A549 (cell line): ENCODE measurements at regions of chr12 and their contacts with region 1.

Region 1: DNA sequence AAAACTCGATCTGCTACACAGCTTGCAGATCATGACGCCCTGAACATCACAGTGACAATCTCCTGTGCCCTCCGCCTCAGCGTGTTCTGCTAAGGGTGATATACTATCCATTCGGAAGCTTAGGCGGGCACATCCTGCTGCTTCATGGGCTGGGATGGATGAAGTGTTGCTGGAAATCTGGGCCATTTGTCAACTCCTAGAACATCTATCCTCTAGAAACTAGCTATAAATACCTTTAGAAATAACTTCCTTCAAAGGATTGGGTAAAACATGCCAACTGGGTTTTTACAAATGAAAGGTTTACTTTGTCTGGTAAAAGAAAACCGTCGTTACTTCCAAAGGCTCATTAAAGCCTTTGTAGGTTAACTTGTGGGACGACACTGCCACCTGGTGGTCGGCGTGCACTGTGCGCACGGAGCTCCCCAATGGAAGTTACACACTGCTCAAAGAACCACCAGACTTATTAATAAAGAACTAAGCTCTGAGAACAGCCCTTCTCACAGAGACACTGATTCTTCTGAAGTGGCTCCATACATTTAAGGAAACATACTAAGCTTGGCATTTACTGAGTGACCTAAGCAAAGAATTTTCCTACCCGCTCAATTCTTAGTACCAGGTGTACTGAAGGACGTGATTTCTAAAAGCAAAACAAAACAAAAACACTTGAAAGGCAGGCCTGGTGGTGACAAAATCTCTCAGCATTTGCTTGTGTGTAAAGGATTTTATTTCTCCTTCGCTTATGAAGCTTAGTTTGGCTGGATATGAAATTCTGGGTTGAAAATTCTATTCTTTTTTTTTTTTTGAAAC is 21.6 kb upstream of the CACNA2D4 start:
- DNase-seq: peak; percentile 72 to 80
- ATAC-seq: peak; percentile 90 to 94
- H3K4me3 ChIP-seq: no peak overlapping the region
- H3K27ac ChIP-seq: no peak overlapping the region
- H3K4me1 ChIP-seq: peaks cover 17% of the 10 kb centered on the region
- CTCF ChIP-seq: peak; percentile 91
- EP300 ChIP-seq: no peak
- POLR2A ChIP-seq: no peak
- RAD21 ChIP-seq: peak; percentile 93 to 94

Region 2: GRCh38 chr12:1634590-1635191 is 305.3 kb before region 1 on chr12:
- CTCF ChIA-PET with region 1: interaction called, 22 read pairs
- POLR2A ChIA-PET with region 1: no interaction called
- DNase-seq: peak; percentile 76 to 82
- ATAC-seq: peak; percentile 74 to 87
- H3K4me3 ChIP-seq: no peak overlapping the region
- H3K27ac ChIP-seq: no peak overlapping the region
- H3K4me1 ChIP-seq: peaks cover 3% of the 10 kb centered on the region; the same call in 1 of the 3 replicates
- CTCF ChIP-seq: peak; percentile 76
- EP300 ChIP-seq: no peak
- POLR2A ChIP-seq: no peak
- RAD21 ChIP-seq: peak; percentile 73 to 80

Region 3: DNA sequence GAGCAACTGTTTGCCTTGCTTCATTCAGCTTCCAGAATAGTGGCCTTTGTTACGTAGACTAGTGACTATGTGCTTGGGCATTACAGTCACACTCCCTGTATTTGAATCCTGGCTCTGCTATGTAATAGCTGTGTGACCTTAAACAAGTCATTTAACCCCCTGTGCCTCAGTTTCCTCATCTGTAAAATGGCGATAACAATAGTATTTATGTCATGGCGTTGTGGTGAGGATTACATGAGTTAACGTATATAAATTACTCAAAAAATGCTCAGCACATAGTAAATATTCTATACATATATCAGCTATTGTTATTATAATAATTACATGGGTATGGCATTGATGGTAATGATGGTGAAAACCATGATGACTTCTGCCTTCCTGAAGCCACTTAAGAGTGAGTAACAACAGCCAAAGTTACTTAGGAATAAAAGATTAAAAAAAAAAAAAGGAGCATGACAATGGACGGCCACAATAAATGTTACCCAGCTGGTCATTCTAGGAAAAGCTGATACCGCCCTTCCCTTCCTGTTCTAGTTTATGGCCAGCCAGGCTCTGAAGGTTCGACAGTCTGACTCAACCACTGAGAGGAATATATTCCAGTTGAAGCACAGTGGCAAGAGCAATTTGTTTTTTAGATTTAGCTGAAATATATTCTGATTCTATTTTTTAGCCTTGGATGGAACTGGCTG is 259.1 kb before region 1 on chr12:
- CTCF ChIA-PET with region 1: interaction called, 13 read pairs
- POLR2A ChIA-PET with region 1: no interaction called
- DNase-seq: no peak
- ATAC-seq: no peak
- H3K4me3 ChIP-seq: no peak overlapping the region
- H3K27ac ChIP-seq: no peak overlapping the region
- H3K4me1 ChIP-seq: no peaks in the 10 kb centered on the region
- CTCF ChIP-seq: no peak
- EP300 ChIP-seq: no peak
- POLR2A ChIP-seq: no peak
- RAD21 ChIP-seq: no peak

Region 4: GRCh38 chr12:1758887-1759286 is 181.1 kb before region 1 on chr12:
- CTCF ChIA-PET with region 1: no interaction called
- POLR2A ChIA-PET with region 1: no interaction called
- DNase-seq: no peak
- ATAC-seq: no peak
- H3K4me3 ChIP-seq: no peak overlapping the region
- H3K27ac ChIP-seq: peak overlapping the region in 1 of 2 experiments; percentile 15; a peak in 2 of 6 replicates
- H3K4me1 ChIP-seq: peaks cover 18% of the 10 kb centered on the region
- CTCF ChIP-seq: no peak
- EP300 ChIP-seq: no peak
- POLR2A ChIP-seq: no peak
- RAD21 ChIP-seq: no peak

Region 5: DNA sequence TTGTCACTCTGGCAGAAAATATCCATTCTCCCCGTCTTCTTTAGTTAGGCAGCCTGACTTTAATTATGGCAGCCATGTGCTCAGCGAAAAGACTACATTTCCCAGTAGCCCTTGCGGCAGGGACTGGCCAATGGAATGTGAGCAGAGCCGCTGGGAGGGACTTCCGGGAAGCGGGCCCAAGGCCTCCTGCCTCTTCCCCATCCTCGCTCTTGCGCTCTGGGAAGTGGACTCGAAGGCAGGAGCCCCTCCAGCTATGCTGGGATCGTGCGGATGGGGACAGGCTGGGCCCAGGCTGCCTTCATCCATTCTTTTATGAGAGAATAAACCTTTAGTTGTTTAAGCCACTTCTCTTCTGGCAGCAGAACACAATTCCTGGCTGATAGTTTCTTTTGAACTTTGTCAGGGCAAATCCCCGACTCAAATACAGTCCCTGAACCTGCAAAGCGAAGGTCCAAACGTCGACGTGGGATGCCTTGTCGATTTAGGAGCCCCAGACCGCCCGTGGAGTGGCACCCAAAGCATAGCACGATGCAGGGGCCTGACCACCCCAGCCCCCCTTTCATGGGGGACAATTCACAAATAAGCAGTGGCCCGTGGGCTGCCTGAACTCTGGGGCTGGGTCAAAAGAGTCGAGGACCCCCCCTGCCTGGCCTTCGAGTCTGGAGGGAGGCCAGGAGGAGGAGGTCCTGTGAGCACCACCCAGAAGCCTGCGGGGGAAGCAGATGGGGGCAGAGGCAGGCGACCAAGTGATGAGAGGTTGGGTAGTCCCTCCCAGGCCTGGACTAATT is 135.3 kb before region 1 on chr12:
- CTCF ChIA-PET with region 1: interaction called, 324 read pairs
- POLR2A ChIA-PET with region 1: no interaction called
- DNase-seq: peak; percentile 92 to 93
- ATAC-seq: peak; percentile 80 to 96
- H3K4me3 ChIP-seq: no peak overlapping the region
- H3K27ac ChIP-seq: peak overlapping the region; percentile 60 to 75
- H3K4me1 ChIP-seq: 0 out of 3 replicates have a peak, but pooled peaks cover 4% of the 10 kb centered on the region
- CTCF ChIP-seq: no peak
- EP300 ChIP-seq: no peak
- POLR2A ChIP-seq: peak; percentile 41
- RAD21 ChIP-seq: no peak

Region 6: DNA sequence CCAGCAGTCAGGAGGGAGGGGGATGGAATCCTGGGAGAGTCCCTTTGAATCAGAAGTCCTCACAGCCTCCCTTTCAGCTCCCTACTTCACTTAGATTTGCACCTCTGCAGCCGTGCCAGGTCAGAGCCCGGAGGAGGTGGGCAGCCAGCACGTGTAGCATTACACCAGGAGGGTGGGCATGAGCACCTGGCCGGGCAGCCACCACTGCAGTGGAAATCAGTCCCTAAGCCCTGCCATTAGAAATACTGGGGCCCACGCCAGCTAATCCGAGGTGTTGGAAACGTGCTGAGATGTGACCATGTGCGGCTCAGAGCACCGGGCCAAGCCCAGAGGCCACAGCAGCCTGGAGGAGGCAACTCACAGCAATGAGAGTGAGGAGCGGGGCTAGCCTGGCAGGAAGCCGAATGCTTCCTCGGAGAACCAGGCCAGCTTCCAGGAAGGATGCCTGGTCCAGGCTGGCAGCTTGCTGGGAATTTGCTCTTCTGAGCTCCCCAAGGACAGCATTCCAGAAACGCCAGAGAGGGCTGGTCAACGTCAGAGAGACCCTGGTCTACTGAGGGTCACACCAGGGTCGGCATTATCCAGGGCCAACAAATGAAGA is 12.2 kb before region 1 on chr12:
- CTCF ChIA-PET with region 1: interaction called, 54 read pairs
- POLR2A ChIA-PET with region 1: interaction called, 3 read pairs
- DNase-seq: no peak
- ATAC-seq: no peak
- H3K4me3 ChIP-seq: no peak overlapping the region
- H3K27ac ChIP-seq: no peak overlapping the region
- H3K4me1 ChIP-seq: no peaks in the 10 kb centered on the region
- CTCF ChIP-seq: no peak
- EP300 ChIP-seq: no peak
- POLR2A ChIP-seq: no peak
- RAD21 ChIP-seq: no peak

Region 7: DNA sequence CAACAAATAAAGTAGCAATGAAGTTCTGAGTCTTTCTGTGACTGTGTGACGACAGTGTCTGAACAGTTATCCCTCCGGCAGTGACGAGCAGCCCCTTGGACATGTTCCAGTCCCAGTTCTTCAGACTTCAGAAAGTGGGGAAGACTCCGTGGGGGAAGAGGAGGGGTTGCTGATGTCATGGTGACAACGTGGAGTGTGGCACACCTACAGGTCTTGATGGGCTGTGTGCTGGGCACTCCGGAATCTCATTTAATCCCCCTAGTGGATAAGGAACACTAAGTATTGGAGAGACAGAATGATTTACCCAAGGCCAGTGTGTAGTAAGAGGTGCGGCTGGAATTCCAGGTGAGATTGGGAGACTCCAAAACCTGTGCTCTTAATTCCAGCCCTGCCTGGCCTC is 392.9 kb after region 1 on chr12:
- CTCF ChIA-PET with region 1: no interaction called
- POLR2A ChIA-PET with region 1: no interaction called
- DNase-seq: peak in 1 of 2 experiments; percentile 13
- ATAC-seq: peak; percentile 45 to 67; a peak in 4 of 6 replicates
- H3K4me3 ChIP-seq: no peak overlapping the region
- H3K27ac ChIP-seq: no peak overlapping the region
- H3K4me1 ChIP-seq: no peaks in the 10 kb centered on the region; the same call in 2 of the 3 replicates
- CTCF ChIP-seq: no peak
- EP300 ChIP-seq: no peak
- POLR2A ChIP-seq: no peak
- RAD21 ChIP-seq: no peak

Region 8: GRCh38 chr12:2451025-2451424 is 511.0 kb after region 1 on chr12:
- CTCF ChIA-PET with region 1: no interaction called
- POLR2A ChIA-PET with region 1: no interaction called
- DNase-seq: no peak
- ATAC-seq: no peak
- H3K4me3 ChIP-seq: no peak overlapping the region
- H3K27ac ChIP-seq: no peak overlapping the region
- H3K4me1 ChIP-seq: no peaks in the 10 kb centered on the region
- CTCF ChIP-seq: no peak
- EP300 ChIP-seq: no peak
- POLR2A ChIP-seq: no peak
- RAD21 ChIP-seq: no peak

Region 9: DNA sequence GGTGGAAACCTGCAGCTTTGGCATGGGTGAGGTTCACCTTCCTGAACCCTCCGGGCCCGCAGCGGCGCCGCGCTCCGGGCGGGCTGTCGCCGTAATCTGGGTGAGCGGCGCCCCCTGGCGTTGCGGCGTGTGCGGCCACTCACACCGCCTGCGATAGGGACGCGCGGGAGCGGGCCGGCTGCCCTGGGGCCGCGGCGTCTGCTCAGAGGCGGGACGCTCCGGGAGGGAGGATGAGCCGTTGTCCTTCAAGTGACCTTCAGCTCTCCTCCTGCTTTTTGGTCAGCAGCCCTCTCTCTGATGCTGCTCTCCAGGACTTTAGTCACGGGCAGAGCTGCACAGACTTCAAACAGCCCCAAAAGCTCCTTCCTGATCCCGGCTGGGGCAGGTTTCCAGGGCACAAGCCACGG is 643.1 kb after region 1 on chr12:
- CTCF ChIA-PET with region 1: interaction called, 11 read pairs
- POLR2A ChIA-PET with region 1: no interaction called
- DNase-seq: peak; percentile 41 to 55
- ATAC-seq: peak; percentile 84 to 97
- H3K4me3 ChIP-seq: peak overlapping the region; percentile 30; the same call in 2 of the 3 replicates
- H3K27ac ChIP-seq: no peak overlapping the region
- H3K4me1 ChIP-seq: peaks cover 3% of the 10 kb centered on the region; the same call in 1 of the 3 replicates
- CTCF ChIP-seq: peak; percentile 83
- EP300 ChIP-seq: no peak
- POLR2A ChIP-seq: no peak
- RAD21 ChIP-seq: peak; percentile 77 to 91